CD4-positive, alpha-beta T cell (primary cell): ENCODE measurements at regions of chr6 and their contacts with region 1.

Region 1: GRCh38 chr6:26285143-26286134 is 79.6 kb upstream of the BTN3A2 start:
- DNase-seq: peak; percentile 85 to 99 (median 92)
- ATAC-seq: peak; percentile 82
- H3K4me3 ChIP-seq: peak overlapping the region; percentile 62
- H3K4me3 Mint-ChIP-seq: peak overlapping the region; percentile 87
- H3K27ac ChIP-seq: peak overlapping the region; percentile 82 to 85
- H3K27ac Mint-ChIP-seq: peak overlapping the region; percentile 96
- H3K4me1 ChIP-seq: peaks cover 16% of the 10 kb centered on the region
- H3K4me1 Mint-ChIP-seq: peaks cover 24% of the 10 kb centered on the region
- H3K27me3 ChIP-seq: no peaks in the 10 kb centered on the region
- H3K27me3 Mint-ChIP-seq: peaks cover 11% of the 10 kb centered on the region
- CTCF ChIP-seq: no peak

Region 2: DNA sequence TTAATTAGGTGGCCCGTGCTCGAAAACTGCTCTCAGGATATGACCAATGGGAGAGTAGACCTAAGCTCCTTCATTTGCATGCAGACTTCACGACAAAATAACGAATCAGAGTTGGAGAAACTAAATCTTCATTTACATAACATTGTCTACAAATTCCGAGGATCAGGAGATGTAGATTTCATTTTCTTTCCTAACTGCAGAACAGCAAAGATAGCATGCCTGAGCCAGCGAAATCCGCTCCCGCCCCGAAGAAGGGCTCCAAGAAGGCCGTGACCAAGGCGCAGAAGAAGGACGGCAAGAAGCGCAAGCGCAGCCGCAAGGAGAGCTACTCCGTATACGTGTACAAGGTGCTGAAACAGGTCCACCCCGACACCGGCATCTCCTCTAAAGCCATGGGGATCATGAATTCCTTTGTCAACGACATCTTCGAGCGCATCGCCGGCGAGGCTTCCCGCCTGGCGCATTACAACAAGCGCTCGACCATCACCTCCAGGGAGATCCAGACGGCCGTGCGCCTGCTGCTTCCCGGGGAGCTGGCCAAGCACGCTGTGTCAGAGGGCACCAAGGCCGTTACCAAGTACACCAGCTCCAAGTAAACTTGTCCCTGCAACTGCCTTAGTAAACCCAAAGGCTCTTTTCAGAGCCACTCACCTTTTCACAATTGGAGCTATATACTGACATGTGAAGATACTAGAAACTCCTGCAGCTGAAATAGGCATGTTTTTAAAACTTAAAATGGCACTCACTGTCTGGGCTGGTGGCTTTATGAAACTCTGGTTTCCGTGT is 101.7 kb before region 1 on chr6:
- CTCF ChIA-PET with region 1: interaction called, 3 read pairs
- POLR2A ChIA-PET with region 1: interaction called, 34 read pairs
- intact Hi-C with region 1: no loop called
- DNase-seq: peak in 13 of 14 experiments; percentile 20 to 94 (median 48)
- ATAC-seq: peak; percentile 89
- H3K4me3 ChIP-seq: peak overlapping the region; percentile 62
- H3K4me3 Mint-ChIP-seq: peak overlapping the region; percentile 99
- H3K27ac ChIP-seq: peak overlapping the region; percentile 43 to 72
- H3K27ac Mint-ChIP-seq: peak overlapping the region; percentile 86
- H3K4me1 ChIP-seq: peaks cover 34% of the 10 kb centered on the region
- H3K4me1 Mint-ChIP-seq: peaks cover 42% of the 10 kb centered on the region
- H3K27me3 ChIP-seq: no peaks in the 10 kb centered on the region
- H3K27me3 Mint-ChIP-seq: no peaks in the 10 kb centered on the region
- CTCF ChIP-seq: no peak

Region 3: GRCh38 chr6:26223650-26224546 is 61.5 kb before region 1 on chr6:
- CTCF ChIA-PET with region 1: no interaction called
- POLR2A ChIA-PET with region 1: interaction called, 42 read pairs
- intact Hi-C with region 1: no loop called
- DNase-seq: peak in 13 of 14 experiments; percentile 45 to 93 (median 60)
- ATAC-seq: peak; percentile 87
- H3K4me3 ChIP-seq: peak overlapping the region; percentile 68
- H3K4me3 Mint-ChIP-seq: no peak overlapping the region
- H3K27ac ChIP-seq: peak overlapping the region; percentile 72 to 82
- H3K27ac Mint-ChIP-seq: no peak overlapping the region
- H3K4me1 ChIP-seq: peaks cover 18% of the 10 kb centered on the region
- H3K4me1 Mint-ChIP-seq: peaks cover 5% of the 10 kb centered on the region
- H3K27me3 ChIP-seq: no peaks in the 10 kb centered on the region
- H3K27me3 Mint-ChIP-seq: no peaks in the 10 kb centered on the region
- CTCF ChIP-seq: no peak

Region 4: GRCh38 chr6:26249957-26250697 is 35.3 kb before region 1 on chr6:
- CTCF ChIA-PET with region 1: interaction called, 7 read pairs
- POLR2A ChIA-PET with region 1: interaction called, 132 read pairs
- intact Hi-C with region 1: loop called (anchors 1 to 2 kb)
- DNase-seq: peak; percentile 64 to 93 (median 74)
- ATAC-seq: peak; percentile 78
- H3K4me3 ChIP-seq: peak overlapping the region; percentile 75
- H3K4me3 Mint-ChIP-seq: peak overlapping the region; percentile 97
- H3K27ac ChIP-seq: peak overlapping the region; percentile 72 to 80
- H3K27ac Mint-ChIP-seq: peak overlapping the region; percentile 88
- H3K4me1 ChIP-seq: peaks cover 29% of the 10 kb centered on the region
- H3K4me1 Mint-ChIP-seq: peaks cover 44% of the 10 kb centered on the region
- H3K27me3 ChIP-seq: no peaks in the 10 kb centered on the region
- H3K27me3 Mint-ChIP-seq: no peaks in the 10 kb centered on the region
- CTCF ChIP-seq: no peak

Region 5: GRCh38 chr6:26312501-26313390 is 27.3 kb after region 1 on chr6:
- CTCF ChIA-PET with region 1: interaction called, 3 read pairs
- POLR2A ChIA-PET with region 1: interaction called, 6 read pairs
- intact Hi-C with region 1: loop called in 1 of 2 experiments (anchors 2 kb)
- DNase-seq: peak; percentile 73 to 92 (median 82)
- ATAC-seq: peak; percentile 54
- H3K4me3 ChIP-seq: peak overlapping the region; percentile 69
- H3K4me3 Mint-ChIP-seq: peak overlapping the region; percentile 92
- H3K27ac ChIP-seq: peak overlapping the region in 1 of 2 donors; percentile 24
- H3K27ac Mint-ChIP-seq: peak overlapping the region; percentile 93
- H3K4me1 ChIP-seq: peaks cover 7% of the 10 kb centered on the region
- H3K4me1 Mint-ChIP-seq: peaks cover 44% of the 10 kb centered on the region
- H3K27me3 ChIP-seq: no peaks in the 10 kb centered on the region
- H3K27me3 Mint-ChIP-seq: peaks cover 30% of the 10 kb centered on the region
- CTCF ChIP-seq: no peak

Region 6: GRCh38 chr6:26329763-26330511 is 44.5 kb after region 1 on chr6:
- CTCF ChIA-PET with region 1: interaction called, 3 read pairs
- POLR2A ChIA-PET with region 1: interaction called, 14 read pairs
- intact Hi-C with region 1: loop called in 1 of 2 experiments (anchors 2 kb)
- DNase-seq: peak in 13 of 14 experiments; percentile 23 to 84 (median 47)
- ATAC-seq: peak; percentile 21
- H3K4me3 ChIP-seq: no peak overlapping the region
- H3K4me3 Mint-ChIP-seq: peak overlapping the region; percentile 88
- H3K27ac ChIP-seq: no peak overlapping the region
- H3K27ac Mint-ChIP-seq: peak overlapping the region; percentile 92
- H3K4me1 ChIP-seq: peaks cover 27% of the 10 kb centered on the region
- H3K4me1 Mint-ChIP-seq: peaks cover 61% of the 10 kb centered on the region
- H3K27me3 ChIP-seq: peaks cover 23% of the 10 kb centered on the region in 2 experiments
- H3K27me3 Mint-ChIP-seq: peaks cover 41% of the 10 kb centered on the region
- CTCF ChIP-seq: no peak